ENCODE measurements at regions of chr17 and their contacts with region 1.

Region 1: DNA sequence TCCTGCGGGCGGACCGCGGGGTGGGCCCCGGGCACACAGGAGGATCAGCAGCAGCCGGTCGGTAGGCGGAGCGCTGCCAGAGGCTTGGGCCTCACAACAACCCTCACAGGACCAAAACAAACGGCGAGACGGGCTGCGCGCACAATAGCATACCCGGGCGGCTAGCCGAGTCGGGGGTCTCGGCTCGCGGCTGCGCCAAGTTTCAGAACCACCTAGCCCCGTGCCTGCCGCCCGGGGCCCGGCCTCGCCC is 747 bp downstream of the ULK2 start:
- DNase-seq: peak; percentile 37 to 43 (median 41)
- H3K4me3 ChIP-seq: peak overlapping the region; percentile 69 to 83 (median 72)
- H3K4me3 Mint-ChIP-seq: peak overlapping the region; percentile 87 to 95
- H3K27ac ChIP-seq: peak overlapping the region; percentile 40 to 77
- H3K27ac Mint-ChIP-seq: peak overlapping the region in 6 of 7 donors; percentile 59 to 84 (median 70)
- H3K4me1 ChIP-seq: peaks cover 21 to 29% of the 10 kb centered on the region in 2 donors
- H3K4me1 Mint-ChIP-seq: peaks cover 22% of the 10 kb centered on the region
- H3K27me3 ChIP-seq: no peaks in the 10 kb centered on the region
- H3K27me3 Mint-ChIP-seq: peaks cover 0 to 2% (median 0%) of the 10 kb centered on the region in 3 donors
- CTCF ChIP-seq: no peak

Region 2: GRCh38 chr17:19648475-19649406 is 218.2 kb before region 1 on chr17 and contains the start of gene ALDH3A2:
- intact Hi-C with region 1: no loop called
- DNase-seq: peak; percentile 87 to 88 (median 87)
- H3K4me3 ChIP-seq: peak within 1 kb of the TSS; percentile 49 to 89 (median 82)
- H3K4me3 Mint-ChIP-seq: peak within 1 kb of the TSS; percentile 98 to 99
- H3K27ac ChIP-seq: peak within 1 kb of the TSS; percentile 98 to 99
- H3K27ac Mint-ChIP-seq: peak within 1 kb of the TSS; percentile 98 to 100 (median 99)
- H3K4me1 ChIP-seq: peaks cover 28 to 55% of the 10 kb centered on the region in 2 donors
- H3K4me1 Mint-ChIP-seq: peaks cover 53% of the 10 kb centered on the region
- H3K27me3 ChIP-seq: no peaks in the 10 kb centered on the region
- H3K27me3 Mint-ChIP-seq: peaks cover 0 to 1% (median 0%) of the 10 kb centered on the region in 3 donors
- CTCF ChIP-seq: peak; percentile 3
- polyA plus RNA-seq, gene ALDH3A2: 22.5 to 58.0 (median 50.3) TPM

Region 3: DNA sequence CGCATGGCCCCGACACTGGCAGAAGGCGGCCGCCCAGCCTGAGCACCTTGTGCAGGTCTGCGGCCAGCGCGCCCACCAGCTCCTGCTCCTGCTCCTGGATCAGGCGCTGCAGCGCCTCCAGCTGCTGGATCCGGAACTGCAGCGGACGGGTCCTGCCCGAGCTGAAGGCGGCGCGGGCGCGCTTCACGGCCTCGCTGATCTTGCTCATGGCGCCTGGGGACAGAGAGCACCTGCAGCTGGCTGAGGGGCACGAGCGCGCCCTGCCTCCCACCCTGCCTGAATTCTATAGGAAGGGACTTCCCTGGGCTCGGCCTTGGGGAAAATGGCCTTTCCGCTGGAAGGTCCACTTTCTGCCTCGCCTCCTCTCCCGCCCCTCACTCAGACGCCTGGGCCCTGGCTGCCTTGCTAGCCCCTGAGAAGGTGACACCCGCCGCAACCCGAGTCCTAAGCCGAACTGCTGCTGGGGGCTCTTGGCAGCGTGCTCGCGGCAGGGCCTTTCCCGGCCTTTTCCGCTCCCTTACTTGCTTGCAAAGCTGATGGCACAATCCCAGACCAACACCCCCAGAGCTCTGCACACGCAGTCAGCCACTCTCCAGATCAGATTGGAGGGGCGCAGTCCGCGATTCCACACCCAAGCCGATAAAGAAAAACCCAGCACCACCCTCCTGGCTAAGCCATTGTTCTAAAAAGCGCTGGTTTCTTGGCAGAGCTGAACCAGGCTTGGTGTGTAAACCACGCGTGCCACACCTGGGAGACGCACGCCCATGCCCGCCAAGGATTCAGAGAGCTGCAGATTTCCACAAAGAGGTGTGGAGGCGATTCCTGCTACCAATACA is 121.8 kb before region 1 on chr17:
- intact Hi-C with region 1: no loop called
- DNase-seq: peak; percentile 73 to 74 (median 74)
- H3K4me3 ChIP-seq: peak overlapping the region in 2 of 3 experiments; percentile 15 to 68
- H3K4me3 Mint-ChIP-seq: peak overlapping the region; percentile 78 to 86
- H3K27ac ChIP-seq: no peak overlapping the region
- H3K27ac Mint-ChIP-seq: peak overlapping the region in 1 of 7 donors; percentile 12
- H3K4me1 ChIP-seq: peaks cover 8 to 9% of the 10 kb centered on the region in 2 donors
- H3K4me1 Mint-ChIP-seq: peaks cover 9% of the 10 kb centered on the region
- H3K27me3 ChIP-seq: no peaks in the 10 kb centered on the region
- H3K27me3 Mint-ChIP-seq: peaks cover 8 to 13% (median 8%) of the 10 kb centered on the region in 3 donors
- CTCF ChIP-seq: peak; percentile 98

Region 4: DNA sequence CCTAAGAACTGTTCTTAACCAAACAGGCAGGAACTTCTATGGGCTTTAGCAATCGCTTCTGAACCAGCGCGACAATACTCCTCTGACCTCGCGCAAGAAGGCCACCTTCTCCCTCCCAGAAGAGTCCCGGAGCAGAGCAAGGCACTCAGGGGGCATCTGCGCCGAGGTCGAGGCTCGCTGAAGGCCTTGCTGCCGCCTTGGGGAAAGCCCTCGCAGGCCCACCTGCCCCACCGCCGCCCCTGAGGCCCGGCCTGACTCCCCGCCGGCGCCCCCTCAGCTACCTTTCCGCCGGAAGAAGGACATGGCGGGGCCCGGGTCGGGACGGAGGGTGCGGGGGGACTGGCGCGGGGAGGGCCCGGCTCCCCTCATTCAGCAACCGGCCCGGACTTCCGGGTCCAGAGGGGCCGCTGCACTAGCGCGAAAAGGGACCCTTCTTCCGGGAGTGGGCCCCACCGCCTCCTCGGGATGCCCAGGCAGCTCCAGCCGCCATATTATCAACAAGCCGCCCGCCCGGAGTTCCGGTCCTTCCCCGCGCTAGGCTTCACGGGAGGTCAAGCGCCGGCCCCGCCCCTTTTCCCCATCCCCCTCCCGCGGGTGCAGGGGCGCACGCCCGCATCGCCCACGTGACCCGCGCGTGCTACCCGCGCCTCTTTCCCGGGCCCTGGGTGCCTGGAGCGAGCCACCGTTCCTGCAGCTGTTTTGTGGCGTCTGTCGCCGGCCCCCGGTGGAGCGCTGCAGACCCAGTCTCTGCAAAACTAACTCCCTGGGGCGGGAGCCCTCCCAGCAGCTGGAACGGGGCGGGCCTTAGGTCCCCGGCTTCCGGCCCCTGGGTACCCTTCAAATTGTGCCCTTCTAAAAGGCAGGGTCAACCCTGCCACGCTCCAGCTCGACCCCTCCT is 110.6 kb after region 1 on chr17 and contains the start of gene AKAP10:
- intact Hi-C with region 1: loop called in 1 of 2 experiments (anchors 10 kb)
- DNase-seq: peak; percentile 79 to 85 (median 84)
- H3K4me3 ChIP-seq: peak within 1 kb of the TSS; percentile 86 to 94 (median 88)
- H3K4me3 Mint-ChIP-seq: peak within 1 kb of the TSS; percentile 92 to 96
- H3K27ac ChIP-seq: peak within 1 kb of the TSS; percentile 91 to 95
- H3K27ac Mint-ChIP-seq: peak within 1 kb of the TSS; percentile 94 to 98 (median 97)
- H3K4me1 ChIP-seq: peaks cover 51 to 74% of the 10 kb centered on the region in 2 donors
- H3K4me1 Mint-ChIP-seq: peaks cover 68% of the 10 kb centered on the region
- H3K27me3 ChIP-seq: no peaks in the 10 kb centered on the region
- H3K27me3 Mint-ChIP-seq: peaks cover 0 to under 1% (median 0%) of the 10 kb centered on the region in 3 donors
- CTCF ChIP-seq: no peak
- polyA plus RNA-seq, gene AKAP10: 13.1 to 62.6 (median 15.4) TPM